ENCODE measurements at regions of chr5 and their contacts with region 1.

Region 1: DNA sequence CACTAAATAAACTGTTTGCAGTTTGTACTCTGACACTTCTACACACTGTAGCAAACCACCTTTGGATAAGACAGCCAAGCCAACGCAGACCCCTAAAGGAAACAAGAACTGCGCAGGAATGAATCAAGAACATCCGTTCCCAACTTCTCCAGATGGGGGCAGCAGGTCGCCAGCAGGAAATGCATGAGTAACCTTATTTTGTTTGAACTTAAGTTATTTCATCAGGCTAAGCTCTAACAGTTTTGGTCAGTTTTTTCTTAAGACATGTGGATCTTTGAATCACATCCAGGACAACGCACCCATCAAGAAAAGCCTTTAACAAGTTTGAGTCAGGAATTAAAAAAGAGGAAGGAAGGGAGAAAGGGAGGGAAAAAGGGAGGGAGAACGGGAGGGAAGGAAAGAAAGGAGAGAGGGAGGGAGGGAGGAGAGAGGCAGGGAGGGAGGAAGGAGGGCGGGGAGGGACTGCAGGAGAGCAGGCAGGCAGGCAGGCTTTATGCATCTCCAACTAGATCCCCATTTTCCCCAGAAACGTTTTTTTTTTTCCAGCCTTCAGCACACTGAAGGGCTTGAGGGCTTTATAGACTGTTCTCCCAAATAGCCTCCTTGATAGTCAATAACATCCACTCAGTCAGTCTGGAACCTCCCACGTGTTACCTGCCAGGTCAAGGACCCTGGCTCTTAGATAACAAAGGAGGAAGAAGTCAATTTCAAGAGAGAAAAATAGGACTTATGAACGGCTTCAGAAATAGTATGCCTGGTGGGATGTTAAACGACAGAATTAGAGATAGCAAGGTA is 22.2 kb downstream of the BHMT start:
- DNase-seq: peak; percentile 70
- H3K4me3 Mint-ChIP-seq: no peak overlapping the region
- H3K27ac Mint-ChIP-seq: peak overlapping the region; percentile 80
- H3K4me1 Mint-ChIP-seq: peaks cover 8% of the 10 kb centered on the region
- H3K27me3 Mint-ChIP-seq: no peaks in the 10 kb centered on the region

Region 2: DNA sequence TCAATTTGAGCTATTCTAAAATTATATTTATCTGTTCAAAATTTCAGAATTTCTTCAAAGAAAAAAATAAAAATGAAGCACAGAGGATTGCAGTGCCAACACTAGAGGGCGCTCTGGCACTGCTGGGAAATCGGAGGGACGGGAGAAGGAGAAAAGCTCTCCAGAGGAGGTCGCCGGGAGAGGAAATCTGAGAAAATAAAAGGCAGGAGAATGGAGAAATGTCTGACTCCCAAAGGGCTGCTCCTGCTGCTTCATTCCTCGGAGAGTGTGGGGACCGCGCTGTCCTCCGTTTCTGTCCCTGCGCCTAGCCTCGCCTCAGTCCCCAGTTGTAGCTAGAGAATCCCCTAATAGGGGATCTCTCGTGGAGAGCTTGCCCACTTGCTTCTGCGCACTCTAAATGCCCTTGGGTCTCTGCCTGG is 108.8 kb before region 1 on chr5:
- CTCF ChIA-PET with region 1: interaction called, 19 read pairs
- POLR2A ChIA-PET with region 1: no interaction called
- DNase-seq: peak; percentile 53
- H3K4me3 Mint-ChIP-seq: no peak overlapping the region
- H3K27ac Mint-ChIP-seq: no peak overlapping the region
- H3K4me1 Mint-ChIP-seq: peaks cover 7% of the 10 kb centered on the region
- H3K27me3 Mint-ChIP-seq: peaks cover 56% of the 10 kb centered on the region

Region 3: GRCh38 chr5:79464695-79465332 is 331.0 kb after region 1 on chr5:
- CTCF ChIA-PET with region 1: interaction called, 12 read pairs
- POLR2A ChIA-PET with region 1: no interaction called
- DNase-seq: no peak
- H3K4me3 Mint-ChIP-seq: no peak overlapping the region
- H3K27ac Mint-ChIP-seq: no peak overlapping the region
- H3K4me1 Mint-ChIP-seq: no peaks in the 10 kb centered on the region
- H3K27me3 Mint-ChIP-seq: peaks cover 2% of the 10 kb centered on the region